Adrenal gland (tissue), 19 donors: ENCODE measurements at regions of chr3 and their contacts with region 1.

Region 1: DNA sequence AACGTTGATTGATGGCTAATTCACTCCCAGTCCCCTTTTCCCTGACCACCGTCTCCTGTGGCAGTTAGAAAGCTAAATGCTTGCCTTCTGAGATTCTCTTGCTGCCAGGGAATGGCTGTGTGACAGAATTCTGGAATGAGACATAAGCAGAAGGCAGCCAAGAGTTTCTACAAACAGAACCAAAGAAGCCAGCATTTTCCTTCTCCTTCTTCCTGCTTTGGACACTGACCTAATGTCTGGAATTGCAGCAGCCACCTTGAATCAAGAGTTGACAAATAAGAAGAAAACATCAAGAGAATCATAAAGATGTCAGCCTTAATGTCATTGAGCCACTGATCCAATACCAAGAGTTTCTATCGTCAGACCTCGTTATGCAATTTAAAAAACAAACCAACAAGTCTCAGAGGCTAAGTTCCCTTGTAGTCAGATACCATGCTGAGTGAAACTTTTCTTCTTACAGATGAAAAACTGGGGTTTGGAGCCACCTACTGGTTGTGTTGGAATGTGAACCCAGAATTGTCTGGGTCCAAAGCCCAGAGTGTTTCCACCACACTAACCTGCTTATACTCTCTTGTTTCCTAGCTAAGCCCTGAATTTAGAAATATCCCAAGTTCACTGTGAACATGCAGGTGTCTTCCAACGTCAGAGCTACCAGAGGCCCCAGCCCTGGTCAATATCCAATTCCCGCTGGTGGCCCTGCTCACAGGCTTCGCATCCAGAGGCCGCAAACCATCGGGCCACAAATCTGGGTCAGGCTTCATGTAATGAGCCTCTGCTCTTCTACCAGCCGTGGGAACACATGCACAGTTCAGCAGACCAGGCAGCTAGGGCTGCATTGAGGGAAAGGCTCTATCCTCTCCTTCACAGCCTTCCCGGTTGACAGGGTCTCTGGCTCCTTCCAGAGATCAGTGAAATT is 42.5 kb downstream of the MCF2L2 start:
- DNase-seq: peak; percentile 57 to 83 (median 66)
- H3K4me3 ChIP-seq: no peak overlapping the region
- H3K27ac ChIP-seq: peak overlapping the region; percentile 16 to 67 (median 50)
- H3K4me1 ChIP-seq: peaks cover 3 to 24% of the 10 kb centered on the region in 2 donors
- H3K27me3 ChIP-seq: no peaks in the 10 kb centered on the region
- CTCF ChIP-seq: peak; percentile 68 to 85 (median 80)
- POLR2A ChIP-seq: no peak

Region 2: GRCh38 chr3:183122257-183122932 is 263.6 kb before region 1 on chr3:
- intact Hi-C with region 1: loop called (anchors 5 to 10 kb)
- DNase-seq: peak in 1 of 7 donors; percentile 35
- H3K4me3 ChIP-seq: no peak overlapping the region
- H3K27ac ChIP-seq: no peak overlapping the region
- H3K4me1 ChIP-seq: no peaks in the 10 kb centered on the region
- H3K27me3 ChIP-seq: no peaks in the 10 kb centered on the region
- CTCF ChIP-seq: peak; percentile 78 to 92 (median 86)
- POLR2A ChIP-seq: no peak

Region 3: GRCh38 chr3:183180105-183180783 is 205.7 kb before region 1 on chr3:
- intact Hi-C with region 1: loop called in 1 of 2 experiments (anchors 5 kb)
- DNase-seq: no peak
- H3K4me3 ChIP-seq: no peak overlapping the region
- H3K27ac ChIP-seq: no peak overlapping the region
- H3K4me1 ChIP-seq: peaks cover 2 to 3% of the 10 kb centered on the region in 2 donors
- H3K27me3 ChIP-seq: no peaks in the 10 kb centered on the region
- CTCF ChIP-seq: no peak
- POLR2A ChIP-seq: no peak

Region 4: GRCh38 chr3:183688871-183689270 is 302.9 kb after region 1 on chr3:
- intact Hi-C with region 1: no loop called
- DNase-seq: no peak
- H3K4me3 ChIP-seq: no peak overlapping the region
- H3K27ac ChIP-seq: no peak overlapping the region
- H3K4me1 ChIP-seq: no peaks in the 10 kb centered on the region
- H3K27me3 ChIP-seq: no peaks in the 10 kb centered on the region
- CTCF ChIP-seq: no peak
- POLR2A ChIP-seq: no peak